ENCODE measurements at regions of chr2 and their contacts with region 1.

Region 1: GRCh38 chr2:99066075-99066958 is 75.2 kb upstream of the C2orf15 start:
- DNase-seq: peak; percentile 78
- ATAC-seq: peak; percentile 98
- H3K4me3 ChIP-seq: no peak overlapping the region
- H3K27ac ChIP-seq: no peak overlapping the region
- H3K4me1 ChIP-seq: no peaks in the 10 kb centered on the region
- H3K27me3 ChIP-seq: no peaks in the 10 kb centered on the region
- CTCF ChIP-seq: peak; percentile 82

Region 2: DNA sequence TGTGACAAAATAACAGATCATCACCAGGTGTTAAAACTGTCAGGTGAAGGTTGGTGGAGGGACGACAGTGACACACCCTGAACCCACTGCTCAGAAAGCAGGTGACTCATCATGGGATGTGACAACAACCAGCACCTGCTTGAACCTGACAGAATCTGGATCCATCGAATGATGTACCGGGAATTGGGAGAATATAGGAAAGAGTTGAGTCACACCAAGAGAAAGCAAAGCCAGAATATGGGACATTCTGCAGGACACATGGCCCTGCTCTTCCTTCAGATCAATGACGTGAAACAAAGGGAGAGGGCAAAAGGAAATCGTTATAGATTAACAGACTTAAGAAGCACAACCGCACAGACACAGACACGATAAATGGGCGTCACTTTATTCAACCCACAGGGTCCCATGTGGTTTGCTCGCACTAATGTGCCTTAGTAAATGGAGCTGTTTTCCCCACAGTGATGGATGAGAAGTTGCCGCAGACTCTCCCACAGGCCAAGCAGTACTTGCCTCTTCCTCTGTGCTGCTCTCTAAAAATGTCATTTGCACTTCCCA is 230.4 kb before region 1 on chr2:
- CTCF ChIA-PET with region 1: no interaction called
- POLR2A ChIA-PET with region 1: no interaction called
- intact Hi-C with region 1: loop called (anchors 1 kb)
- DNase-seq: peak; percentile 39
- ATAC-seq: no peak
- H3K4me3 ChIP-seq: no peak overlapping the region
- H3K27ac ChIP-seq: no peak overlapping the region
- H3K4me1 ChIP-seq: 0 out of 2 replicates have a peak, but pooled peaks cover 5% of the 10 kb centered on the region
- H3K27me3 ChIP-seq: no peaks in the 10 kb centered on the region
- CTCF ChIP-seq: no peak

Region 3: DNA sequence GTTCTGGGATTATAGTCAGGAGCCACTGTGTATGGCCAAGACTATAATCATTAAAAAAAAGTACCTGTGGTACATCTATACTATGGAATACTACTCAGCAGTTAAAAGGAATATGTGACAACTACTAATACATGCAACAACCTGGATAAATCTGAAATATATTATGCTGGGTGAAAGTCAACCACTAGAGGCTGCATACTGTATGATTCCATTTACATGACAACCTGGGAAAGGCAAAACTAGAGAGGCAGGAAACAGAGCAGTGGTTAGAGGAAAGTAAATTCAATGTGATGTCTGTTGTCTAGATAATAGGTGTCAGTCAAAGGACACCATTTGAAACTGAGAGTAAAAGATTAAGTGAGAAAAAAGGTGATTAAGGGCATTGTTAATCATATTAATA is 67.2 kb before region 1 on chr2:
- CTCF ChIA-PET with region 1: no interaction called
- POLR2A ChIA-PET with region 1: no interaction called
- intact Hi-C with region 1: no loop called
- DNase-seq: peak; percentile 20
- ATAC-seq: no peak
- H3K4me3 ChIP-seq: no peak overlapping the region
- H3K27ac ChIP-seq: no peak overlapping the region
- H3K4me1 ChIP-seq: no peaks in the 10 kb centered on the region
- H3K27me3 ChIP-seq: no peaks in the 10 kb centered on the region
- CTCF ChIP-seq: 0 out of 2 replicates have a peak, but pooled peaks have one; percentile 10